PC-3 (cell line): ENCODE measurements at regions of chr17 and their contacts with region 1.

Region 1: GRCh38 chr17:72397687-72398086 is 276.9 kb downstream of the SOX9 start:
- DNase-seq: peak; percentile 94
- ATAC-seq: peak; percentile 27
- H3K4me3 ChIP-seq: peak overlapping the region; percentile 3; the same call in 1 of the 2 replicates
- H3K27ac ChIP-seq: peak overlapping the region; percentile 97
- H3K4me1 ChIP-seq: peaks cover 76% of the 10 kb centered on the region
- H3K27me3 ChIP-seq: no peaks in the 10 kb centered on the region
- CTCF ChIP-seq: no peak

Region 2: GRCh38 chr17:72244494-72244893 is 153.2 kb before region 1 on chr17:
- CTCF ChIA-PET with region 1: no interaction called
- POLR2A ChIA-PET with region 1: no interaction called
- intact Hi-C with region 1: loop called (anchors 5 kb)
- DNase-seq: peak; percentile 72
- ATAC-seq: peak; percentile 90
- H3K4me3 ChIP-seq: no peak overlapping the region
- H3K27ac ChIP-seq: peak overlapping the region; percentile 45
- H3K4me1 ChIP-seq: peaks cover 14% of the 10 kb centered on the region
- H3K27me3 ChIP-seq: no peaks in the 10 kb centered on the region
- CTCF ChIP-seq: no peak

Region 3: DNA sequence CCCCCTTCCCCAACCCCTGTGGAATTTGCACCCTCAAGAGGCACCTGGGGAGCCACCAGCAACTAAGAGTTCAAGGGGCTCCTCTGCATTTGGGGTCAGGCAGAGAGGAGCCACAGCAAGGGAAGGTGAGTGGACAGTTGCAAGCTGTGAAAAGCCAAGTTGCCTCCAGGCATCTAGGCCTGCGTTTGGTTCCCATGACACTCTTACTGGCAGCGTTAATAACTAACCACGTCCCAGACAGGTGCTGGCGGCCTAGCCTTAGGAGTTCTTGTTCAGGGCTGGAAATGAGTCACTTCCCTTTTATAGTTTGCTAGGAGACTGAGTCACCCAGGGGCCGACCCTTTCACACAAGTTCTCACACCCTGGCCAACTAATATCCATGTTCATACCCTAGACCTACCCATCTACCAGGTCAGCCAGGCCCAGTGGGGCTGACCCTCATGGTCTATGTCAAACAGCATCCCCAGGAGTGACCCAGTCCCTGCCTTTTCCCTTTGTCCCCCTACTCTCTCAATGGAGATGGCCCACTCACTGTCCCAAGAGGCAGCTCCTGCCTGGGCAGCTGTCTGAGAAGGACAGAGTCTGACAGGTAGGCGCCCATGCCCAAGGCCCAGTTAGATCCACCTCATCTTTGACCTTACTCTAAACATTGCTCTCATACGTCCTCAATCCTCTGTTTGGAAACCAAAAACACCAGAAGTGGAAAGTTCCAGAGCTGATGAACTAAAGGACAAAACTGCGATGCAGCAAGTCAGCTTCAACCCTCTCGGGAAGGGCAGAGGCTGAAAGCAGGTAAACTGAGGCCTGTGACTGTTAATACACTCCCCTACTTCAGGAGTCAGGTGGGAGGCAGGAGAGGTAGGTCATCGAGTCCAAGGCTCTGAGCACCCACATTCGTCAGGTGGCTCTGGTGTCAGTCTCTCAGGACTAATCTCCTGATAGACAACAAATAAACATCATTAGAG is 23.7 kb after region 1 on chr17:
- CTCF ChIA-PET with region 1: no interaction called
- POLR2A ChIA-PET with region 1: no interaction called
- intact Hi-C with region 1: loop called (anchors 1 kb)
- DNase-seq: peak; percentile 100
- ATAC-seq: peak; percentile 80
- H3K4me3 ChIP-seq: no peak overlapping the region
- H3K27ac ChIP-seq: peak overlapping the region; percentile 94
- H3K4me1 ChIP-seq: peaks cover 41% of the 10 kb centered on the region
- H3K27me3 ChIP-seq: no peaks in the 10 kb centered on the region
- CTCF ChIP-seq: no peak

Region 4: DNA sequence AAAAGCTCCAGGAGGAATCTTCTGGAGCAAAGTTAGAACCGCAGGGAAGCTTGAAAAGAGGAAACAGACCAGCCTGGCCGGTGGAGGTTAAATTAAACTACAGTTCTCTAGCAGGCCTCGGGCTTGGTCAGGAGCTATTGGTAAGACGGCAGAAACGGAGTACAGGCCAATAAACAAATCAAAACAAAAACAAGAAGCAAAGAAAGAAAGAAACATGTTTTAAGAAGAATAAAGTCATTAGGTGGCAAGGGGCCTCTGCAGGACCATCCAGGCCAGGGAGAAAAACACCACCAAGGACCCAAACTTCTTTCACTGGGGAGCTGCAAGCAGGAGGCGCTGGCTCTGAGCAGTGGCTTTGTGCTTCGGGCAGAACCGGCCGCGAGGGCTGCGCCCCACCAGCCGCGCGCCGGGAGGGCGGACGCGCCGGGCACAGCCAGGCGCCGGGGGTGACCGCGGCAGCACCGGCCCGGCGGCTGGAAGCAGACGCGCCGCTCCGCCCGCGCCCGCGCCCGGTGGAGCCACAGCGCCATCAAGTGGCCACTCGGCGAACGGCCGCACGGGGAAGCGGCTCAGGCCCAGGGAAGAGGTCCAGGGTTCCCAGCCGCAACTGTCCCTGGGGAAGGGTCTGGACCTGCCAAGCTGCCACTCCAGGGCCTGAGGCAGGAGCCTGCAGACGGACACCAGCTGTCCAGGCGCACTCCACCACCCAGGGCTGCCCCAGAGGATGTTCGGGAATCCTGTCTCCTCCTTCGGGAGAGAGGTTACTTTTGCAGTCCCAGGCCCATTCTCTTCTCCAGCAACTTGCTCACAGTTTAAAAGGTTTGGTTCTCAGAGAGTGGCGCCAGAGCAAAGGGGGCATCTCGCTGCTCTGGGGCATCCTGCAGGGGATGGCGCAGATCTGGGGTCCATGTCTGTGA is 142.6 kb after region 1 on chr17:
- CTCF ChIA-PET with region 1: no interaction called
- POLR2A ChIA-PET with region 1: no interaction called
- intact Hi-C with region 1: loop called (anchors 1 kb)
- DNase-seq: peak; percentile 90
- ATAC-seq: peak; percentile 98
- H3K4me3 ChIP-seq: peak overlapping the region; percentile 52
- H3K27ac ChIP-seq: peak overlapping the region; percentile 70
- H3K4me1 ChIP-seq: peaks cover 16% of the 10 kb centered on the region
- H3K27me3 ChIP-seq: no peaks in the 10 kb centered on the region
- CTCF ChIP-seq: peak; percentile 79